GM12878 (cell line): ENCODE measurements at regions of chr11 and their contacts with region 1.

Region 1: GRCh38 chr11:10405855-10406592 is 49.0 kb upstream of the AMPD3 start:
- DNase-seq: peak; percentile 4
- ATAC-seq: peak; percentile 96
- H3K4me3 ChIP-seq: no peak overlapping the region
- H3K27ac ChIP-seq: no peak overlapping the region
- H3K4me1 ChIP-seq: no peaks in the 10 kb centered on the region
- H3K27me3 ChIP-seq: no peaks in the 10 kb centered on the region; a peak in 1 of 4 replicates
- CTCF ChIP-seq: peak; percentile 65 to 77 (median 68)
- EP300 ChIP-seq: no peak
- POLR2A ChIP-seq: no peak
- RAD21 ChIP-seq: peak; percentile 85

Region 2: DNA sequence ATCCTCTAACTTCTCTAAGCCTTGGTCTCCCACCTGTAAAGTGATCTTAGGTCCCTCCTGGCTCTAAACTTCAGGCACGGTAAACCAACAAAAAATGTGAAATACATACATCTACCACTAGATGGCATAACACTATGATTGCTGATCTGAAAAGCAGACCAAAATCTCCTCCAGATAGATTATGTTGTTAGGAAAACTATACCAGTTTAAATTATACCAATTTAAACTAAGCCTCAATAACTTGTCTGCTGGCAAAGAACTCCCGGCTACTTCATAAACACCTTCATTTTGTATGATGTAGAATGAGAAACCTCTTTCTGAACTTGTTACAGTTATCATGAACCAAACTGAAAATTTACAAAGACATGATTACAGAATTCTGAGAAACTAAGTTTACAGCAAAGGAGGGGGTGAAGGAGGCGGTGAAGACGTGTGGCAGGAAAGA is 197.9 kb before region 1 on chr11:
- CTCF ChIA-PET with region 1: no interaction called
- POLR2A ChIA-PET with region 1: no interaction called
- RAD21 ChIA-PET with region 1: no interaction called
- SMC1A ChIA-PET with region 1: no interaction called
- in situ Hi-C with region 1: no loop called
- intact Hi-C with region 1: no loop called
- DNase-seq: peak; percentile 32
- ATAC-seq: peak; percentile 71
- H3K4me3 ChIP-seq: no peak overlapping the region
- H3K27ac ChIP-seq: no peak overlapping the region
- H3K4me1 ChIP-seq: no peaks in the 10 kb centered on the region
- H3K27me3 ChIP-seq: peaks cover 0 to 5% of the 10 kb centered on the region in 2 experiments; a peak in 2 of 4 replicates
- CTCF ChIP-seq: peak; percentile 56 to 59 (median 56); a peak in 5 of 6 replicates
- EP300 ChIP-seq: no peak
- POLR2A ChIP-seq: no peak
- RAD21 ChIP-seq: peak; percentile 59

Region 3: DNA sequence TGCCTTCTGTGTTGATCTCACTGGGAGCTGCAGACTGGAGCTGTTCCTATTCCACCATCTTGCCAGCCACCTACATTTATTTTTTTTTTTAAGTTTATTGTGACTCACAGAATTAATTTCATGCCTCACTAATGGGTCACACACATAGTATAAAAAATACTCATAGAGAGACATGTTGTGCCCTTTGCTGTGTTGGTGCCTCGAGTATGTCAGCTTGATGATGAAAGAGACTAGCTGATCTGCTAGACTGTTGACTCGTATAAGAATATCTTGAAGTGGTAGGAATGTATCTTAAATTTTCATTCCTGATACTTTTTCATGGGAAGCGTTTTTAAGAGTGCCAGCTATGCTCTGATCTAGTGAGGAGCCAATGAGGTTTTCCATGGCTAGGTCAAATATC is 20.5 kb after region 1 on chr11:
- CTCF ChIA-PET with region 1: interaction called, 11 read pairs
- POLR2A ChIA-PET with region 1: no interaction called
- RAD21 ChIA-PET with region 1: no interaction called
- SMC1A ChIA-PET with region 1: no interaction called
- in situ Hi-C with region 1: no loop called
- intact Hi-C with region 1: no loop called
- DNase-seq: no peak
- ATAC-seq: no peak
- H3K4me3 ChIP-seq: no peak overlapping the region
- H3K27ac ChIP-seq: no peak overlapping the region
- H3K4me1 ChIP-seq: no peaks in the 10 kb centered on the region
- H3K27me3 ChIP-seq: no peaks in the 10 kb centered on the region; a peak in 3 of 4 replicates
- CTCF ChIP-seq: no peak
- EP300 ChIP-seq: no peak
- POLR2A ChIP-seq: no peak
- RAD21 ChIP-seq: no peak

Region 4: DNA sequence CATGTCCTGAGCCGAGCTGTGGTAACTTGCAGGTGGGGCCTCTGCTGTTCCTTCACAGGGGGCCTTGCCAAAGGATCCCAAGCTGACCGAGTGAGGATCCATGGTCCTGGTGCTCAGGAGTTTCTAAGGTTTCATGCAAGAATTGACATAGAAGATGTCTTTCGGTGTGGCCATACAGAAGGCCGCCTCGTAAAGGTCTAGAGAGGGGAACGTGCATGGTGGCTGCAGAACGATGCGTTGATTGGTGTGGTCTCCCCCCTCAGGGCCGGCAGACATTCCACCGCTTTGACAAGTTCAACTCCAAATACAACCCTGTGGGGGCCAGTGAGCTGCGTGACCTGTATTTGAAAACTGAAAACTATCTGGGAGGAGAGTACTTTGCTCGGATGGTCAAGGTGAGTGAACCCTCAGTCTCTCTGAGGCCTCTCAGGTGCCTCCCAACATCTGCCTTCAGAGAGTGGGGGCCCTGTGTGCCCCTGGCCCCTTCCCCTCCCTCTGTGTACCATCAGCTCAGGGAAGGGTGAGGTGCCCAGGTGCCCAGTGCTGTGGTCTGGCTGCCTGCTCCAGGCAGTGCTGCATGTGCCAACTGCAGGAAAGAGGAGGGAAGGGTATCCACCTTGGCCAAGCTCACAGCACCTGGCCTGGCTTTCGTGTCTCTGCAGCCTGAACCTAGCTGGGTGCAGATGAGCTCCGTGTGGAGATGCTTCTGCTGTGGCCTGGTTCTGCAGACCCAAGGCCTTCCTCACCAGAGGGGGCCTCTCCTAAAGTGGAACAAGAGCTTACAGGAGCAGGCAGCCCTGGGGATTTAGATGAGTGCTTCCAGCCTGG is 88.8 kb after region 1 on chr11:
- CTCF ChIA-PET with region 1: no interaction called
- POLR2A ChIA-PET with region 1: no interaction called
- RAD21 ChIA-PET with region 1: no interaction called
- SMC1A ChIA-PET with region 1: no interaction called
- in situ Hi-C with region 1: no loop called
- intact Hi-C with region 1: no loop called
- DNase-seq: no peak
- ATAC-seq: no peak
- H3K4me3 ChIP-seq: no peak overlapping the region
- H3K27ac ChIP-seq: no peak overlapping the region
- H3K4me1 ChIP-seq: no peaks in the 10 kb centered on the region
- H3K27me3 ChIP-seq: no peaks in the 10 kb centered on the region
- CTCF ChIP-seq: no peak
- EP300 ChIP-seq: no peak
- POLR2A ChIP-seq: no peak
- RAD21 ChIP-seq: no peak

Region 5: GRCh38 chr11:10728789-10729472 is 322.9 kb after region 1 on chr11:
- CTCF ChIA-PET with region 1: interaction called, 8 read pairs
- POLR2A ChIA-PET with region 1: no interaction called
- RAD21 ChIA-PET with region 1: interaction called, 12 read pairs
- SMC1A ChIA-PET with region 1: interaction called, 5 read pairs
- in situ Hi-C with region 1: no loop called
- intact Hi-C with region 1: no loop called
- DNase-seq: no peak
- ATAC-seq: no peak
- H3K4me3 ChIP-seq: no peak overlapping the region
- H3K27ac ChIP-seq: no peak overlapping the region
- H3K4me1 ChIP-seq: peaks cover 6% of the 10 kb centered on the region
- H3K27me3 ChIP-seq: no peaks in the 10 kb centered on the region; a peak in 2 of 4 replicates
- CTCF ChIP-seq: no peak
- EP300 ChIP-seq: no peak
- POLR2A ChIP-seq: no peak
- RAD21 ChIP-seq: no peak